ENCODE measurements at regions of chr14 and their contacts with region 1.

Region 1: DNA sequence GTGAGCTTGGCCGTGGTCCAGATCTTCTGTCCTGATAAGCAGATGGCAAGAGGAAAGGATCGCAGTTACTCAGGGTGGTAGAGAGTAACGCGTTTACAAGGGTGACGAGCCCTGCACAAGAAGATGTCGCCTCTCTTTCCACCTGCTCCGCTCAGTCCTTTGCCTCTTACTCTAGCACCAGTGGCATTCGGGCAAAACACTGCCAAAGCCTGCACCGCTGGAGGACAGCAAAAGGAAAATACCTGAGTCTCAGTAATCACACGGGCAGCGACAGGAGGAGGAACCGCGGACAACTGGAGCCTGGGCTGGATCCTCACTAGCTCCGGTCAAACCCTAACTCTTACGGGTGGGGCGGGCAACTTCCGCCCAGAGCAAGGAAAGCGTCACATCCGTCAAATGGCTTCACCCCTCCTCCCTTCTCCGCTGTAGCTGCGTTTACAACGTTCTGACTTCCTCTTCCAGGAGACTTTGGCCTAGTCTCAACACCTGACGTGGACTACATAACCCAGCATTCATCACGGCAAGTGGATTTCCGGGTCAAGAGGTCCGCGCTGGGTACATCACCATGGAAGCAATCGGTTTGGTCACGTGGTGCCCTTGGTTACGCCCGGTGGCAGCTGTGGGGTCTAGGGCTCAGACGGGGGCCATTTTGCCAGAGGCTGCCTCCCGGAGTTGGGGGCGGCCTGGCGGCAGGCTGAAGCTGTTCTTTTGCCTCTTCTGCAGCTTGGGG is at the starts of genes KLHL28 and TOGARAM1:
- DNase-seq: peak; percentile 86 to 100 (median 98)
- ATAC-seq: peak; percentile 90 to 95 (median 92)
- H3K4me3 ChIP-seq: peak within 1 kb of the TSS; percentile 72 to 95
- H3K4me3 Mint-ChIP-seq: no peak within 1 kb of the TSS
- H3K27ac ChIP-seq: peak within 1 kb of the TSS; percentile 85
- H3K27ac Mint-ChIP-seq: no peak within 1 kb of the TSS
- H3K4me1 ChIP-seq: peaks cover 22 to 28% of the 10 kb centered on the region in 2 experiments
- H3K4me1 Mint-ChIP-seq: peaks cover 41 to 64% (median 62%) of the 10 kb centered on the region in 3 donors
- H3K27me3 ChIP-seq: no peaks in the 10 kb centered on the region
- H3K27me3 Mint-ChIP-seq: no peaks in the 10 kb centered on the region
- total RNA-seq, gene KLHL28: 28.0 to 47.9 (median 35.0) TPM
- total RNA-seq, gene TOGARAM1: 10.9 to 17.1 (median 11.1) TPM

Region 2: DNA sequence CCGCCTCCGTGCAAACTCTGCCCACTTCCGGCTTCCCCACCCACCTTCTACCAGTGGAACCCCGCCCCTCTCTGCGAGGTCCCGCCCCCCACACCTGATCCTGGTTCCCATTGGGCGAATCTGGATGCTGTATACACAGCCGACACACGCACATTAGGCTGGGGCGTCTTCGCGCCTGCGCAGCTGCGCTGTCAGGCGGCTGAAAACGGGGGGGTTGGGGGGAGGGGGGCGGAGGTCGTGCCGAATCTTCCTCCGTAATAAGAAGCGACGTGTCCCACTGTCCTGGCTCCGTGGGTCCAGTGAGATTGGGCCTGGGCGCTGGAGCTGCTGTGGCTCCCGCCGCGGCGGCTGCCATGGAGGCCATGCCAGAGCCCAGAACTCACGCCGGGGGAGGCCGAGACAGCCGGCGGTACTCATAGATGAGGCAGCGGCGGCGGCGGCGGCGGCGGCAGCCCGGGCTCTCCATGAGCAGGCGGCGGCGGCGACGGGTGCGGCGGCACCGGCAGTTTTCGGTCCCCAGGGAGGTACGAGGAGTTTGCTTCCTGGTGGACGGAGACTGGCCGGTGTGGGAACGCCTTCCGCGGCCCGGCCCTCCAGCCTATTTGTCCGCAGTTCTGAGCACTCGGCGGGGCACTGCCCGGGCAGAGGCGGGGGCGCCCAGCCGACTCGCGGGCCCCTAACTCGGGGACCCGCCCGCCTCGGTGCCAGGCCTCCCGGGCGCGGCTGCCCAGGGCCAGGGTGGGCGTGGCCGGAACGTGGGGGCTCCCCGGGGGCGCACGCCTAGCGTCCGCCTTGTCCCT is 64.5 kb before region 1 on chr14:
- CTCF ChIA-PET with region 1: interaction called in 1 of 2 experiments, 9 read pairs
- POLR2A ChIA-PET with region 1: interaction called in 1 of 2 experiments, 17 read pairs
- DNase-seq: peak; percentile 83 to 99 (median 98)
- ATAC-seq: peak; percentile 97 to 98 (median 98)
- H3K4me3 ChIP-seq: peak overlapping the region; percentile 71 to 76
- H3K4me3 Mint-ChIP-seq: peak overlapping the region; percentile 80 to 93 (median 90)
- H3K27ac ChIP-seq: peak overlapping the region; percentile 84
- H3K27ac Mint-ChIP-seq: peak overlapping the region; percentile 93 to 94
- H3K4me1 ChIP-seq: peaks cover 0 to 9% of the 10 kb centered on the region in 2 experiments
- H3K4me1 Mint-ChIP-seq: peaks cover 13 to 36% (median 26%) of the 10 kb centered on the region in 3 donors
- H3K27me3 ChIP-seq: no peaks in the 10 kb centered on the region
- H3K27me3 Mint-ChIP-seq: no peaks in the 10 kb centered on the region

Region 3: DNA sequence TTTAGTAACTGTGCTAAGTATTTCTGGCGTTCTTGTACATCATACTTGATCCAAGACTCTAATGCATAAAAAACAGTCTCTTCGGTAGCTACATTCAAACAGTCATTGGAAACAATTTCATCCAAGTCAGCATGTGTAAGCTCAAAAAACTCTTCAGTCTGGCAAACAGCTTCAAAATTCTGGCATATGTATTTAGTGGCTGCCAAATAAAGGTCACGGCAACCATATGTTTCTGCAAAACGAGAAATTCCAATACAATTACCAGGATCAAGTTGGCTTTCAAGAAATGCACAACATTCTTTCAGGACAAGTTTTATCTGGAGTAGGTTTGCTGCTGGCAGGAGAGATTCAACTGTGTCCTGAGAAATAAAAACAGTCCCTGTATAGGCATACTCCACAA is 16.5 kb before region 1 on chr14:
- CTCF ChIA-PET with region 1: interaction called, 3 to 6 read pairs
- POLR2A ChIA-PET with region 1: interaction called, 5 to 10 read pairs
- DNase-seq: no peak
- ATAC-seq: no peak
- H3K4me3 ChIP-seq: no peak overlapping the region
- H3K4me3 Mint-ChIP-seq: no peak overlapping the region
- H3K27ac ChIP-seq: no peak overlapping the region
- H3K27ac Mint-ChIP-seq: no peak overlapping the region
- H3K4me1 ChIP-seq: peaks cover 3 to 7% of the 10 kb centered on the region in 2 experiments
- H3K4me1 Mint-ChIP-seq: peaks cover 54 to 71% (median 56%) of the 10 kb centered on the region in 3 donors
- H3K27me3 ChIP-seq: no peaks in the 10 kb centered on the region
- H3K27me3 Mint-ChIP-seq: no peaks in the 10 kb centered on the region

Region 4: GRCh38 chr14:44979740-44980356 is 18.1 kb after region 1 on chr14:
- CTCF ChIA-PET with region 1: interaction called in 1 of 2 experiments, 3 read pairs
- POLR2A ChIA-PET with region 1: interaction called, 3 to 14 read pairs
- DNase-seq: no peak
- ATAC-seq: no peak
- H3K4me3 ChIP-seq: no peak overlapping the region
- H3K4me3 Mint-ChIP-seq: no peak overlapping the region
- H3K27ac ChIP-seq: no peak overlapping the region
- H3K27ac Mint-ChIP-seq: no peak overlapping the region
- H3K4me1 ChIP-seq: peaks cover 0 to 2% of the 10 kb centered on the region in 2 experiments
- H3K4me1 Mint-ChIP-seq: peaks cover 17 to 38% (median 27%) of the 10 kb centered on the region in 3 donors
- H3K27me3 ChIP-seq: no peaks in the 10 kb centered on the region
- H3K27me3 Mint-ChIP-seq: no peaks in the 10 kb centered on the region

Region 5: DNA sequence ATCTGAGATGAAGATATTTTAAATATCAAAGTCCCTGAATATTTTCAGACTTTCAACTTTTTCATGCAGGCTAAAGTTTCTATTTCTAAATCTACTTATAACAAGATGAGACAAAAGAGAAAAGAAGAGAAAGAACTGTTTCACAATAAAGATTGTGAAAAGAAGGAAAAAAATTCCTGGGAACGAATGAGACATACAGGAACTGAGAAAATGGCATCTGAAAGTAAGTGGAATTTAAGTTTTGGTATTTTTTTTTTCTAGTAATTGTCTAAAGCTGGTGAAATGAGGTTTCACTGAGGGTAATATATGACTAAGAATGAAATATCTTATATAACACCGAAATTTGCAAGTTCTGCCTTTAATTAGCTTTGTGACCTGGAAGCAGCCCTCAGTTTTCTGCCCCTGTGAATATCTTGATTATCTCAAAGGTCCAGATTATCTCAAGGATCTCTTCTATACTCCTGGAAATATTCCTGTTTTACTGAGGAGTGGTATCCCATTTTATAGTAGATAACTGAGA is 66.4 kb after region 1 on chr14:
- CTCF ChIA-PET with region 1: no interaction called
- POLR2A ChIA-PET with region 1: no interaction called
- DNase-seq: no peak
- ATAC-seq: no peak
- H3K4me3 ChIP-seq: no peak overlapping the region
- H3K4me3 Mint-ChIP-seq: no peak overlapping the region
- H3K27ac ChIP-seq: no peak overlapping the region
- H3K27ac Mint-ChIP-seq: no peak overlapping the region
- H3K4me1 ChIP-seq: no peaks in the 10 kb centered on the region
- H3K4me1 Mint-ChIP-seq: no peaks in the 10 kb centered on the region
- H3K27me3 ChIP-seq: no peaks in the 10 kb centered on the region
- H3K27me3 Mint-ChIP-seq: no peaks in the 10 kb centered on the region

Region 6: GRCh38 chr14:45134051-45134958 is 172.5 kb after region 1 on chr14 and contains the start of gene FKBP3:
- CTCF ChIA-PET with region 1: interaction called, 4 to 16 read pairs
- POLR2A ChIA-PET with region 1: interaction called, 4 to 8 read pairs
- DNase-seq: peak; percentile 89 to 98 (median 96)
- ATAC-seq: peak; percentile 90 to 97 (median 93)
- H3K4me3 ChIP-seq: peak within 1 kb of the TSS; percentile 76 to 94
- H3K4me3 Mint-ChIP-seq: peak within 1 kb of the TSS; percentile 96 to 99 (median 98)
- H3K27ac ChIP-seq: peak within 1 kb of the TSS; percentile 92
- H3K27ac Mint-ChIP-seq: peak within 1 kb of the TSS; percentile 97 to 99
- H3K4me1 ChIP-seq: peaks cover 19 to 29% of the 10 kb centered on the region in 2 experiments
- H3K4me1 Mint-ChIP-seq: peaks cover 53 to 56% (median 55%) of the 10 kb centered on the region in 3 donors
- H3K27me3 ChIP-seq: no peaks in the 10 kb centered on the region
- H3K27me3 Mint-ChIP-seq: no peaks in the 10 kb centered on the region
- total RNA-seq, gene FKBP3: 33.8 to 49.3 (median 45.2) TPM